ENCODE measurements at regions of chr12 and their contacts with region 1.

Region 1: GRCh38 chr12:26126340-26127284 is 1.8 kb upstream of the BHLHE41 start:
- DNase-seq: peak; percentile 88
- ATAC-seq: peak; percentile 42
- H3K4me3 ChIP-seq: peak overlapping the region; percentile 32 to 87 (median 74)
- H3K4me3 Mint-ChIP-seq: peak overlapping the region; percentile 99
- H3K27ac ChIP-seq: peak overlapping the region; percentile 67 to 87
- H3K27ac Mint-ChIP-seq: peak overlapping the region; percentile 98
- H3K4me1 ChIP-seq: peaks cover 48 to 49% of the 10 kb centered on the region in 2 donors
- H3K4me1 Mint-ChIP-seq: peaks cover 61% of the 10 kb centered on the region
- H3K27me3 ChIP-seq: peaks cover 0 to 14% (median 0%) of the 10 kb centered on the region in 4 experiments
- H3K27me3 Mint-ChIP-seq: peaks cover 4% of the 10 kb centered on the region
- CTCF ChIP-seq: peak; percentile 22

Region 2: GRCh38 chr12:26077915-26078702 is 48.5 kb before region 1 on chr12:
- CTCF ChIA-PET with region 1: no interaction called
- POLR2A ChIA-PET with region 1: no interaction called
- intact Hi-C with region 1: no loop called
- DNase-seq: no peak
- ATAC-seq: no peak
- H3K4me3 ChIP-seq: no peak overlapping the region
- H3K4me3 Mint-ChIP-seq: no peak overlapping the region
- H3K27ac ChIP-seq: no peak overlapping the region
- H3K27ac Mint-ChIP-seq: no peak overlapping the region
- H3K4me1 ChIP-seq: no peaks in the 10 kb centered on the region
- H3K4me1 Mint-ChIP-seq: no peaks in the 10 kb centered on the region
- H3K27me3 ChIP-seq: no peaks in the 10 kb centered on the region
- H3K27me3 Mint-ChIP-seq: no peaks in the 10 kb centered on the region
- CTCF ChIP-seq: no peak

Region 3: GRCh38 chr12:26113853-26114719 is 12.5 kb before region 1 on chr12:
- CTCF ChIA-PET with region 1: interaction called, 12 read pairs
- POLR2A ChIA-PET with region 1: interaction called, 11 read pairs
- intact Hi-C with region 1: loop called (anchors 1 kb)
- DNase-seq: peak; percentile 94
- ATAC-seq: peak; percentile 80
- H3K4me3 ChIP-seq: peak overlapping the region in 4 of 5 experiments; percentile 67 to 80 (median 70)
- H3K4me3 Mint-ChIP-seq: peak overlapping the region; percentile 87
- H3K27ac ChIP-seq: peak overlapping the region; percentile 91 to 95
- H3K27ac Mint-ChIP-seq: peak overlapping the region; percentile 75
- H3K4me1 ChIP-seq: peaks cover 36 to 47% of the 10 kb centered on the region in 2 donors
- H3K4me1 Mint-ChIP-seq: peaks cover 49% of the 10 kb centered on the region
- H3K27me3 ChIP-seq: no peaks in the 10 kb centered on the region
- H3K27me3 Mint-ChIP-seq: no peaks in the 10 kb centered on the region
- CTCF ChIP-seq: peak; percentile 48

Region 4: GRCh38 chr12:26162905-26163304 is 36.3 kb after region 1 on chr12:
- CTCF ChIA-PET with region 1: interaction called, 72 read pairs
- POLR2A ChIA-PET with region 1: interaction called, 117 read pairs
- intact Hi-C with region 1: no loop called
- DNase-seq: peak; percentile 60
- ATAC-seq: peak; percentile 75
- H3K4me3 ChIP-seq: no peak overlapping the region
- H3K4me3 Mint-ChIP-seq: peak overlapping the region; percentile 51
- H3K27ac ChIP-seq: peak overlapping the region in 1 of 2 donors; percentile 20
- H3K27ac Mint-ChIP-seq: peak overlapping the region; percentile 80
- H3K4me1 ChIP-seq: peaks cover 44 to 53% of the 10 kb centered on the region in 2 donors
- H3K4me1 Mint-ChIP-seq: peaks cover 56% of the 10 kb centered on the region
- H3K27me3 ChIP-seq: no peaks in the 10 kb centered on the region
- H3K27me3 Mint-ChIP-seq: no peaks in the 10 kb centered on the region
- CTCF ChIP-seq: no peak

Region 5: GRCh38 chr12:26274441-26275312 is 148.1 kb after region 1 on chr12:
- CTCF ChIA-PET with region 1: interaction called, 10 read pairs
- POLR2A ChIA-PET with region 1: interaction called, 7 read pairs
- intact Hi-C with region 1: loop called (anchors 2 kb)
- DNase-seq: peak; percentile 58
- ATAC-seq: peak; percentile 96
- H3K4me3 ChIP-seq: no peak overlapping the region
- H3K4me3 Mint-ChIP-seq: peak overlapping the region; percentile 18
- H3K27ac ChIP-seq: no peak overlapping the region
- H3K27ac Mint-ChIP-seq: peak overlapping the region; percentile 78
- H3K4me1 ChIP-seq: peaks cover 16 to 28% of the 10 kb centered on the region in 2 donors
- H3K4me1 Mint-ChIP-seq: peaks cover 43% of the 10 kb centered on the region
- H3K27me3 ChIP-seq: no peaks in the 10 kb centered on the region
- H3K27me3 Mint-ChIP-seq: no peaks in the 10 kb centered on the region
- CTCF ChIP-seq: no peak

Region 6: DNA sequence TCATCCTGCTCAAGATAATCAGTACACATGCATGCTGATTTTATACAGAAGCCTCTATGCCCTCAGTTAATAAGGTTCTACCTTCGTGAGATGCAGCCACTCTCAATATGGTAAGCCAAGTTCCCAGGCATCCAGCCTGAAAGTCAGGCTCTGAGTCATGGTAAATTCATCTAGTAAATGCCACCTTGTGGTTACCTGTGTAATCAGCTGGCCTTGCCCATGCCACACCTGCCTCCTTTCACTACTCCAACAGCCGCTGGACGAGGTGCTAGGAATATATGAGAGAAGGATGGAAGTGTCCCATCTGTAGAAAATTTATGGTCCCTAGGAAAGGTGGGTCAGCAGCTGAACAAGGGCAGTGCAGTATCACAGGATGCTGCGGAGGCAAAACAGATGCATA is 276.0 kb after region 1 on chr12:
- CTCF ChIA-PET with region 1: interaction called, 55 read pairs
- POLR2A ChIA-PET with region 1: no interaction called
- intact Hi-C with region 1: no loop called
- DNase-seq: peak; percentile 43
- ATAC-seq: peak; percentile 53
- H3K4me3 ChIP-seq: no peak overlapping the region
- H3K4me3 Mint-ChIP-seq: no peak overlapping the region
- H3K27ac ChIP-seq: no peak overlapping the region
- H3K27ac Mint-ChIP-seq: no peak overlapping the region
- H3K4me1 ChIP-seq: peaks cover 0 to 4% of the 10 kb centered on the region in 2 donors
- H3K4me1 Mint-ChIP-seq: peaks cover 2% of the 10 kb centered on the region
- H3K27me3 ChIP-seq: no peaks in the 10 kb centered on the region
- H3K27me3 Mint-ChIP-seq: no peaks in the 10 kb centered on the region
- CTCF ChIP-seq: peak; percentile 38

Region 7: GRCh38 chr12:26471560-26471959 is 344.9 kb after region 1 on chr12:
- CTCF ChIA-PET with region 1: no interaction called
- POLR2A ChIA-PET with region 1: interaction called, 3 read pairs
- intact Hi-C with region 1: loop called (anchors 1 kb)
- DNase-seq: peak; percentile 69
- ATAC-seq: peak; percentile 70
- H3K4me3 ChIP-seq: peak overlapping the region in 1 of 5 experiments; percentile 8
- H3K4me3 Mint-ChIP-seq: peak overlapping the region; percentile 36
- H3K27ac ChIP-seq: peak overlapping the region; percentile 39 to 63
- H3K27ac Mint-ChIP-seq: peak overlapping the region; percentile 78
- H3K4me1 ChIP-seq: peaks cover 30 to 38% of the 10 kb centered on the region in 2 donors
- H3K4me1 Mint-ChIP-seq: peaks cover 47% of the 10 kb centered on the region
- H3K27me3 ChIP-seq: no peaks in the 10 kb centered on the region
- H3K27me3 Mint-ChIP-seq: no peaks in the 10 kb centered on the region
- CTCF ChIP-seq: no peak

Region 8: GRCh38 chr12:26760657-26761293 is 634.2 kb after region 1 on chr12:
- CTCF ChIA-PET with region 1: no interaction called
- POLR2A ChIA-PET with region 1: no interaction called
- intact Hi-C with region 1: no loop called
- DNase-seq: no peak
- ATAC-seq: no peak
- H3K4me3 ChIP-seq: no peak overlapping the region
- H3K4me3 Mint-ChIP-seq: no peak overlapping the region
- H3K27ac ChIP-seq: no peak overlapping the region
- H3K27ac Mint-ChIP-seq: no peak overlapping the region
- H3K4me1 ChIP-seq: no peaks in the 10 kb centered on the region
- H3K4me1 Mint-ChIP-seq: no peaks in the 10 kb centered on the region
- H3K27me3 ChIP-seq: no peaks in the 10 kb centered on the region
- H3K27me3 Mint-ChIP-seq: no peaks in the 10 kb centered on the region
- CTCF ChIP-seq: no peak

Region 9: GRCh38 chr12:26937875-26938700 is 811.5 kb after region 1 on chr12 and contains the starts of genes FGFR1OP2 and INTS13:
- CTCF ChIA-PET with region 1: no interaction called
- POLR2A ChIA-PET with region 1: no interaction called
- intact Hi-C with region 1: loop called (anchors 5 kb)
- DNase-seq: peak; percentile 97
- ATAC-seq: peak; percentile 91
- H3K4me3 ChIP-seq: peak within 1 kb of the TSS; percentile 72 to 100 (median 98)
- H3K4me3 Mint-ChIP-seq: peak within 1 kb of the TSS; percentile 99
- H3K27ac ChIP-seq: peak within 1 kb of the TSS; percentile 88 to 96
- H3K27ac Mint-ChIP-seq: peak within 1 kb of the TSS; percentile 99
- H3K4me1 ChIP-seq: peaks cover 18 to 57% of the 10 kb centered on the region in 2 donors
- H3K4me1 Mint-ChIP-seq: peaks cover 64% of the 10 kb centered on the region
- H3K27me3 ChIP-seq: no peaks in the 10 kb centered on the region
- H3K27me3 Mint-ChIP-seq: no peaks in the 10 kb centered on the region
- CTCF ChIP-seq: no peak
- total RNA-seq, gene FGFR1OP2: 64.3 and 67.3 TPM in 2 replicates
- total RNA-seq, gene INTS13: 15.6 and 16.2 TPM in 2 replicates

Measured in B cell (primary cell).